HepG2 (cell line): ENCODE measurements at regions of chr17 and their contacts with region 1.

Region 1: DNA sequence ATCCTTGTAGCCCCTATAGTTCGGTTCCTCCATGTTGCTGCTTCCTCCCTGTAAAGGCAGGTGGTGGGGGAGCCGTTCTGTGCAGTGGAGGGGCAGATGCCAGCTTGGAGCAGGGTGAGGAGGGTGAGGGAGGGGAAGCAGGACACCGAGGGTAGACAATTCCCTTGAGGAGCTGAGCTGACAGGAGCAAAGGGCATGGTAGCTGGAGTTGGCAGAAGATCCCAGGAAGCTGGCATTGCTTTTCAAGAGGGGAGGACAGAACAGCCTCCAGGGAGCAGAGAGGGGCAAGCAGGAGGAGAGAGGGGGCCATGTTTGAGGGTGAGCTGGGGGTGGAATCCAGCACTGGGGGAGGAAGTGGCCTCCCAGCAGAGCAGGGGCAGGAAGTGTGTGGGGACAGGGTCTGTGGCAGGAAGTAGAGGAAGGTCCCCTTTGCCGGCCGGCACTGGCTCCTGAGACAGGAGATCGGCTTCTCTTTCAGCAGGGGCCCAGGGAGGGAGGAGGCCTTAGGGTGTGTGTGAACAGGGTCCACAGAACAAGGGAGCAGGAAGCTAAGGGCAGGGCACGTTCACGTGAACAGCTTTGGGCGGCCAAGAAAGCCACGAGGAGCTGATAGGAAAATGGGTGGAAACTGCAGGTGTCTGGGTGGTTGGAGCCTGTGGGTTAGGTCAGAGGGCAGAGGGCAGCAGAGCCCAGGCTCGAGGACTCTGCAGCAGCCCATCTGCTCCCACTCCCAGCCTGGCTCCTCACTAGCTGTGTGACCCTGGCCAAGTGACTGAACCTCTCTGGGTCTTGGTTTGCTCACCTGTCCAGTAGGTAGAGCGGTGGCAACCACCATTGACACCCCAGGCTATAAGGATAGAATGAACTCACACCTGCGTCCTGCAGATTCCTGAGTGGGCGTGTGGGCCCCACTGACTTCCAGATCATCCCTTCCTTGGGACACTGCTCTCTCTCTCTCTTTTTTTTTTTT is 17.5 kb upstream of the SPNS2 start:
- DNase-seq: no peak
- ATAC-seq: peak; percentile 59
- H3K4me3 ChIP-seq: peak overlapping the region; percentile 34 to 67 (median 37)
- H3K27ac ChIP-seq: peak overlapping the region; percentile 20
- H3K4me1 ChIP-seq: peaks cover 63% of the 10 kb centered on the region
- H3K27me3 ChIP-seq: peaks cover 1 to 44% of the 10 kb centered on the region in 2 experiments
- CTCF ChIP-seq: peak; percentile 24; the same call in 1 of the 2 replicates
- EP300 ChIP-seq: 0 out of 4 replicates have a peak, but pooled peaks of 1 of the 2 experiments have one; percentile 22
- POLR2A ChIP-seq: no peak
- RAD21 ChIP-seq: no peak

Region 2: GRCh38 chr17:4444782-4445473 is 36.3 kb before region 1 on chr17:
- CTCF ChIA-PET with region 1: no interaction called
- POLR2A ChIA-PET with region 1: no interaction called
- in situ Hi-C with region 1: no loop called
- intact Hi-C with region 1: loop called (anchors 5 kb)
- DNase-seq: no peak
- ATAC-seq: no peak
- H3K4me3 ChIP-seq: no peak overlapping the region
- H3K27ac ChIP-seq: no peak overlapping the region
- H3K4me1 ChIP-seq: peaks cover 32% of the 10 kb centered on the region
- H3K27me3 ChIP-seq: peaks cover 3 to 21% of the 10 kb centered on the region in 2 experiments; a peak in 3 of 5 replicates
- CTCF ChIP-seq: no peak
- EP300 ChIP-seq: no peak
- POLR2A ChIP-seq: no peak
- RAD21 ChIP-seq: no peak